ENCODE measurements at regions of chr10 and their contacts with region 1.

Region 1: GRCh38 chr10:17023386-17024298 is 106.0 kb downstream of the CUBN start:
- DNase-seq: peak; percentile 99
- H3K4me3 ChIP-seq: no peak overlapping the region
- CTCF ChIP-seq: no peak

Region 2: GRCh38 chr10:16933783-16934182 is 89.9 kb before region 1 on chr10:
- in situ Hi-C with region 1: no loop called
- DNase-seq: no peak
- H3K4me3 ChIP-seq: no peak overlapping the region
- CTCF ChIP-seq: no peak

Region 3: DNA sequence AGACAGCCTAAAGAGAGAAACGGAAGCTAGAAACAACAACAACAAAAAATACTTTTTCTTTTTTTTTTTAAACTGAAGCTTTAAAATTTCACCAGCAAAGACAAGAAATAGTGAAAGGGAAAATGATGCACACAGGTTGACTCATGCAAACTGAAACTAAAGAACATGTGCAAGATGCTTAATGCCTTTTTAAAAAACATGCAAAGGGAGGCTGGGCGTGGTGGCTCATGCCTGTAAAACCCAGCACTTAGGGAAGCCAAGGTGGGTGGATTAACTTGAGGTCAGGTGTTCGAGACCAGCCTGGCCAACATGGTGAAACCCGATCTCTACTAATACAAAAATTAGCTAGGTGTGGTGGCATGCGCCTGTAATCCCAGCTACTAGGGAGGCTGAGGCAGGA is 121.1 kb after region 1 on chr10:
- in situ Hi-C with region 1: loop called (anchors 25 kb)
- DNase-seq: no peak
- H3K4me3 ChIP-seq: no peak overlapping the region
- CTCF ChIP-seq: no peak

Region 4: GRCh38 chr10:17200912-17201793 is 177.5 kb after region 1 on chr10 and contains the start of gene TRDMT1:
- in situ Hi-C with region 1: loop called (anchors 25 kb)
- DNase-seq: peak; percentile 72
- H3K4me3 ChIP-seq: peak within 1 kb of the TSS; percentile 50
- CTCF ChIP-seq: no peak

Region 5: DNA sequence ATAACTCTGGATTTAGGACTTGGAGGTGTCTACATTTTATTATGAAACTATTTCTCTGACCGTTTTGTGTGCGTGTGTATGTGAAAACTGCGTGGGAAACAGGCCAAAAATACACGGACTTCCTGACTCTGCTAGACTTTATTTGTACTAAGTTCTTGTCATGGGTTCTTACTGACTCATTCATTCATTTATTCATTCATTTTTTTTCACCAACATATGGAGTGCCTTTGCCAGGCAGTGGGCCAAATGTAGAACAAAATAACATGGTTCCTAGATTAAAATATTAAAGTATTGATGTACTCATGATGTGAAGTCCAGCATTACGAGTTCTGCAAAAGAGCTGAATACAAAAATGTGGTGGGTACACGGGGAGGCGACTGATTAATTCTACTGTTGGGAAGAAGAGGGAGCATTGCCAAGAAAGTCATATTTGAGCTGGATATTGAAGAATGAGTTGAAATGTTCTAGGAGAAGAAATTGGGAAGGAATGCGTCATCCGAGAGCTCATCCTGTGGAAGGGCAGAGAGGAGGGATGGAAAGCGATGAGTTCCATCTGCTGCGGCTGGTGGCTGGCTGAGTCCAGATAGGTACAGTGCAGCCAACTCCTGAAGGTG is 1141.2 kb after region 1 on chr10:
- in situ Hi-C with region 1: no loop called
- DNase-seq: peak; percentile 38
- H3K4me3 ChIP-seq: no peak overlapping the region
- CTCF ChIP-seq: no peak